H1 (cell line): ENCODE measurements at regions of chr20 and their contacts with region 1.

Region 1: DNA sequence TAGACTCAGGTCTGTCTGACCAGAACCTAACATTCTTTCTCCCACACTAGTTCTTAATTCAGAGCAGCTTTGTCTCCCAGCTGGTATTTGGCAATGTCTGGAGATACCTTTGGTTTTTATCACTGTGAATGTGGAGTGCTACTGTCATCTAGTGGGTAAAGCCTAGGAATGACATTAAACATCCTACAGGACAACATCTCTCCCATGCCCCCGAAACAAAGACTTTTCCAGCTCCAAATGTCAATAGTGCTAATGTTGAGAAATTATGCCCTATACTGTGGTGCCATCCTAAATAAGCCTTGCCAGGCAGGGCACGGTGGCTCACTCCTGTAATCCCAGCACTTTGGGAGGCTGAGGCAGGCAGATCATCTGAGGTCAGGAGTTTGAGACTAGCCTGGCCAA is 4.2 kb upstream of the TTPAL start:
- DNase-seq: no peak
- H3K4me3 ChIP-seq: no peak overlapping the region
- H3K27ac ChIP-seq: no peak overlapping the region
- H3K4me1 ChIP-seq: peaks cover 2 to 7% (median 2%) of the 10 kb centered on the region in 4 experiments; a peak in 5 of 7 replicates
- H3K27me3 ChIP-seq: no peaks in the 10 kb centered on the region; a peak in 1 of 7 replicates
- CTCF ChIP-seq: peak in 2 of 3 experiments; percentile 32 to 46; a peak in 2 of 4 replicates
- EP300 ChIP-seq: no peak
- POLR2A ChIP-seq: no peak
- RAD21 ChIP-seq: peak; percentile 67 to 68

Region 2: DNA sequence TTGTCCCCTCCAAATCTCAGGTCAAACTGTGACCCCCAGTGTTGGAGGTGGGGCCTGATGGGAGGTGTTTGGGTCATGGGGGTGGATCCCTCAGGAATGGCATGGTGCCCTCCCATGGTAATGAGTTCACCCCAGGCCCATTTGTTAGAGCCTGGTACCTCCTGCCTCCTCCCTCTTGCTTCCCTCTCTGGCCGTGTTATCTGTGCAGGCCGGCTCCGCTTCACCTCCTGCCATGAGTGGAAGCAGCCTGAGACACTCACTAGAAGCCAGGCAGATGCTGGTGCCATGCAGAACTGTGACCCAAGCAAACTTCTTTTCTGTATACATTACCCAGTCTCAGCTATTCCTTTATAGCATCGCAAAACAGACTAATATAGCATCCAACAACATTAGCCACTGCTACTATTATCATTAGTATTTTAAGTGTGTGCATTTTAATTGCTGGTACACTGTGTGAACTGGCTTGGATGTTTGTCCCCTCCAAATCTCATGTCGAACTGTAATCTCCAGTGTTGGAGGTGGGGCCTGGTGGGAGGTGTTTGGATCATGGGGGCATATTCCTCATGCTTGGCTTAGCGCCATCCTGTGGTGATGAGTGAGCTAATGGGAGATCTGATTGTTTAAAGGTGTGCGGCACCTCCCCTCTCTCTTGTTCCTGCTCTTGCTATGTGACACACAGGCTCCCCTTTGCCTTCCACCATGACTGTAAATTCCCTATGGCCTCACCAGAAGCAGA is 248.7 kb before region 1 on chr20:
- CTCF ChIA-PET with region 1: interaction called, 25 read pairs
- POLR2A ChIA-PET with region 1: no interaction called
- DNase-seq: no peak
- H3K4me3 ChIP-seq: no peak overlapping the region
- H3K27ac ChIP-seq: no peak overlapping the region
- H3K4me1 ChIP-seq: peaks cover 0 to 3% (median under 1%) of the 10 kb centered on the region in 4 experiments; a peak in 1 of 7 replicates
- H3K27me3 ChIP-seq: no peaks in the 10 kb centered on the region
- CTCF ChIP-seq: peak; percentile 52 to 78 (median 54)
- EP300 ChIP-seq: no peak
- POLR2A ChIP-seq: no peak
- RAD21 ChIP-seq: peak; percentile 13 to 41; a peak in 3 of 4 replicates

Region 3: GRCh38 chr20:44435630-44436335 is 35.7 kb before region 1 on chr20:
- CTCF ChIA-PET with region 1: no interaction called
- POLR2A ChIA-PET with region 1: no interaction called
- DNase-seq: no peak
- H3K4me3 ChIP-seq: no peak overlapping the region
- H3K27ac ChIP-seq: no peak overlapping the region
- H3K4me1 ChIP-seq: no peaks in the 10 kb centered on the region
- H3K27me3 ChIP-seq: no peaks in the 10 kb centered on the region
- CTCF ChIP-seq: no peak
- EP300 ChIP-seq: no peak
- POLR2A ChIP-seq: no peak
- RAD21 ChIP-seq: no peak